Thyroid gland (tissue), 4 donors: ENCODE measurements at regions of chr10 and their contacts with region 1.

Region 1: GRCh38 chr10:31318854-31319601 is at the start of gene ZEB1:
- DNase-seq: peak; percentile 95 to 96
- H3K4me3 ChIP-seq: peak within 1 kb of the TSS; percentile 71 to 97 (median 88)
- H3K27ac ChIP-seq: peak within 1 kb of the TSS; percentile 81 to 98 (median 96)
- H3K4me1 ChIP-seq: peaks cover 0 to 7% of the 10 kb centered on the region in 2 donors
- H3K27me3 ChIP-seq: no peaks in the 10 kb centered on the region
- CTCF ChIP-seq: peak; percentile 40 to 80 (median 68)
- POLR2A ChIP-seq: peak; percentile 9 to 63
- total RNA-seq, gene ZEB1: 51.7 to 67.7 (median 57.9) TPM

Region 2: GRCh38 chr10:30134171-30134945 is 1184.7 kb before region 1 on chr10:
- intact Hi-C with region 1: no loop called
- DNase-seq: no peak
- H3K4me3 ChIP-seq: no peak overlapping the region
- H3K27ac ChIP-seq: no peak overlapping the region
- H3K4me1 ChIP-seq: no peaks in the 10 kb centered on the region
- H3K27me3 ChIP-seq: no peaks in the 10 kb centered on the region
- CTCF ChIP-seq: no peak
- POLR2A ChIP-seq: no peak

Region 3: GRCh38 chr10:31031558-31032257 is 287.3 kb before region 1 on chr10 and contains the start of gene ZNF438:
- intact Hi-C with region 1: loop called (anchors 10 kb)
- DNase-seq: peak; percentile 93
- H3K4me3 ChIP-seq: peak within 1 kb of the TSS; percentile 17 to 80 (median 49)
- H3K27ac ChIP-seq: peak within 1 kb of the TSS; percentile 99 to 100 (median 100)
- H3K4me1 ChIP-seq: peaks cover 27 to 44% of the 10 kb centered on the region in 2 donors
- H3K27me3 ChIP-seq: no peaks in the 10 kb centered on the region
- CTCF ChIP-seq: peak in 5 of 6 experiments; percentile 29 to 87 (median 69)
- POLR2A ChIP-seq: peak; percentile 4 to 93
- total RNA-seq, gene ZNF438: 19.2 to 21.8 (median 20.3) TPM

Region 4: DNA sequence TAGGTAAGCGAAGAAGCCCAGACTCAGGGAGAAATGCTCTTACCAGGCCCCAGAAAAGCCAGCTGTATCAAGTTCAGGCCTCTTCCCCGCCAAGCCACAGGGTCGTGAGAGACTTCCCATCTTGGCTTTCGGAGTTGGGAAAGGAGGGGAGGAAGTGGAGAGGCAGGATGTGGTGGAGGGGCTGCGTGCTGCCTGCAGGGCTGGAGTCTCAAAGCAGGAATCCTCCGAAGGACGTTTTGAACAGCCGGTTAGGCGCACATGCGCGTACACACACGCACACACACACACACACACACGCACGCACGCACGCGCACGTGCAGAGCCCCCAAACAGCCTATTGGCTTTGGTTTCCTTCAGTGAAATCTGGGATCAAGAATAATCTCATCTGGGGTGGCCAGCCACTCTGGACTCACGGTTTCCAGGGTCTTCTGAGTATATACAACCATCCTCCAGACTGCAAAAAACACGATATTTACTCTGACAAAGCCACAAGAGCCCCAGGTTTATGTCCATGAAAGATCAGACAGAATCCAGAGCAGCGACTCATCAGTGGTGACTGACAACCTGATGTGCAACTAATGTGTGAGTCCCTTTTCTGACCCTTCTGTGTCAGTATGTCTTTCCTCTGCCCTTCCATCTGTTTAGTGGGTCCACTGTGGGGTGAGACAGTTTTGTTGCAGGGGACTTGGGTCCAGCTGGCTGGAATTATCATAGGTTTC is 172.4 kb before region 1 on chr10:
- intact Hi-C with region 1: no loop called
- DNase-seq: no peak
- H3K4me3 ChIP-seq: no peak overlapping the region
- H3K27ac ChIP-seq: no peak overlapping the region
- H3K4me1 ChIP-seq: peaks cover 0 to 18% of the 10 kb centered on the region in 2 donors
- H3K27me3 ChIP-seq: no peaks in the 10 kb centered on the region
- CTCF ChIP-seq: no peak
- POLR2A ChIP-seq: no peak

Region 5: DNA sequence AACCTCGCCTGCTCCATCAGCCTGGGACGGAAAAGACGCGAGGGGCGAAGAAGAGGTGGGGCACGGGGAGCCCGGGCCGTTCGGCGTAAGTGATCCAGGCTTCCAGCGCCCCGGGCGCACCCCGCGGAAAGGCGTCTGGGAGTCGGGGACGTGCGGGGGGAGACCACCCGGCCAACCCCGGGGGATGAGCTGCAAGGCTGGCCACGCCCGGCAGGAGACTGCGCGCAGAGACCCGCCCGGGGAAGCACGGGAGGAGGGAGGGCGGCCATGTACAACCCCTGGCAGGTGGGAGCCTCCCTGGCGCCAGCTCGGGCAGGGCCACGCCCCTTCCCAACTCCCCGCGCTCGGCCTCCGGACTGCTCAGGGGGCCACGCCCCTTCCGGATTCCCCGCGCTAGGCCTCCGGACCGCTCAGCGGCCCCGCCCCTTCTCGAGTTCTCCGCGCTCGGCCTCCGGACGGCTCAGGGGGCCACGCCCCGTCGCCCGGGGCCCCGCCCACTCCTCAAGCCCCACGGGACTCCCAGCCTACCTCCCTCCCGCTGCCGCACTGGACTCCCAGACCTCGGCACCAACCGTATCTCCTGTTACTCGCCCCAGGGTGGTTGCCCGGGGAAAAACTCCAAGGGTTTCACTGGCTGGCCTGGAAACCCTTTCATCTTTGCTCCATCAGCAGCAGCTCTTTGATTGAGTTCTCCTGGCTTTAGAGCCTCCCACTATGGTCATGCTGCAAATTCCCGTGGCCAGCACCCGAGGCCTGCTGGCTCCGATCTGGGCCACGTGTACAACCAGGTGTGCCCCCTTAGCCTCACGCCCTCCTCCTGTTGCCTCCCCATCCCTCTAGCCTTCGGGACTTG is 284.4 kb after region 1 on chr10:
- intact Hi-C with region 1: loop called (anchors 10 kb)
- DNase-seq: peak; percentile 91
- H3K4me3 ChIP-seq: peak overlapping the region in 2 of 3 donors; percentile 76 to 92
- H3K27ac ChIP-seq: peak overlapping the region; percentile 65 to 83 (median 71)
- H3K4me1 ChIP-seq: peaks cover 0 to 5% of the 10 kb centered on the region in 2 donors
- H3K27me3 ChIP-seq: no peaks in the 10 kb centered on the region
- CTCF ChIP-seq: peak in 1 of 6 experiments; percentile 10
- POLR2A ChIP-seq: peak; percentile 25 to 59